Cardiac septum (tissue), 1 donor: ENCODE measurements at regions of chr20 and their contacts with region 1.

Region 1: DNA sequence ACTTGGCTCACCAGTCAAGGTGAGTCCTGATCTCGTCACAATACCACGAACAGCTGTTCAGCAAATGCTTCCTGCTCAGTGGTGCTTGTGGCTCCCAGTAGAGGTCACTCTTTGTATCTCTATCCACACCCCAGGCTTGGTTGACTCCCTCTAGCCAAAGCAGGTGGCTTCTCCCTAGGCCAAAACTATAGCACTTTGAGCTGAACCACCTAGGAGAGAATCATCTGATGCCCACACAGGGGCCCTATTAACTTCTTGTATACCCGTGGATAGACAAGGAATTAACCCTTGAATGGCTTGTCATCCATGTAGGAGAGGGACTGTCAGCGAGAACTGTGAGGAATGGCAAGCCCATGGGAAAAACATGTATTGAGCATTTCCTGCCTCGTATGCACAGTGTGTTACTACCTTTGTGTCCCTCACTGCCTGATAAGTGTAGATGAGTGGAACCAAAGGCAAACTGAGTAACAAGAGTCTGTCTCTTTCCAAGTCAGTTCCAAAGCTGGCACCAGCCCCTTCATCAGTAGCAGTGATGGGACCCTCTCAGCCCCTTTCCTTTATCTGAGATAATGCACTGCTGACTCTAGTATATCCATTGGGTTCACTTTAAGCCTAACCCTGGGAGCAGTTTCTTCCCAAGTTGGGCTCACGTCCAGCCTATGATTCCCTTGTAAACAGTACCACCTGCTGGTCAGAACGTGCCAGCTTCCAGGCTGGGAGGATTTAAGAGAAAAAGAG is 42.5 kb downstream of the EIF2S2 start:
- DNase-seq: no peak

Region 2: GRCh38 chr20:33791959-33792597 is 277.4 kb before region 1 on chr20:
- intact Hi-C with region 1: loop called (anchors 5 kb)
- DNase-seq: peak; percentile 77

Region 3: GRCh38 chr20:33862709-33863403 is 206.7 kb before region 1 on chr20:
- intact Hi-C with region 1: loop called (anchors 2 kb)
- DNase-seq: no peak

Region 4: GRCh38 chr20:33933469-33933909 is 136.0 kb before region 1 on chr20:
- intact Hi-C with region 1: loop called (anchors 2 kb)
- DNase-seq: peak; percentile 76

Region 5: GRCh38 chr20:34240693-34241615 is 171.4 kb after region 1 on chr20 and contains the start of gene ASIP:
- intact Hi-C with region 1: no loop called
- DNase-seq: no peak
- total RNA-seq, gene ASIP: 10.5 TPM